ENCODE measurements at regions of chr5 and their contacts with region 1.

Region 1: DNA sequence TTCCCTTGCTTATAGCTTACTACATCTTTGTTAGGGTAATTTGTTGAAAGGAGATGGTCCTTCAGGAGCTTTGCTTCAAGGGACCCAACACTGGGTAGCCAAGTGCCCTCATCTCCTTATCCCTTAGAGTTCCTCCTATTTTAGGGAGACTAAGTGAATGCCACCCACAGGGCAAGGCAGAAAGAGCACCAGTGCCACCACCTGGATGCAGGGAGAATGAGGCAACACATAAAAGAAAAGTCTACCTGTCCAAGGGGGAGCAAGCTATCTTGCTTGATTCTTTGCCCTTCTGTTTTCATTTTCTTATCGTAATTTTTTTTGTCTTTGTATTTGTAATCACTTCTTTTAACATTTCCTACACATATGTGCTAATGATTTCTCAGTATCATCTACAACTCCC is 205.5 kb downstream of the NPR3 start:
- DNase-seq: no peak

Region 2: GRCh38 chr5:33883482-33883881 is 966.8 kb after region 1 on chr5:
- intact Hi-C with region 1: loop called in 1 of 2 experiments (anchors 5 kb)
- DNase-seq: no peak

Measured in posterior vena cava (tissue), 2 donors.